ENCODE measurements at regions of chr11 and their contacts with region 1.

Region 1: GRCh38 chr11:117885777-117886176 is 9.3 kb upstream of the FXYD6 start:
- DNase-seq: peak; percentile 94
- H3K4me3 ChIP-seq: peak overlapping the region in 3 of 4 donors; percentile 13 to 20 (median 14)
- H3K27ac ChIP-seq: peak overlapping the region; percentile 74 to 96 (median 92)
- H3K4me1 ChIP-seq: peaks cover 0 to 83% (median 78%) of the 10 kb centered on the region in 4 donors
- H3K27me3 ChIP-seq: no peaks in the 10 kb centered on the region
- CTCF ChIP-seq: no peak
- EP300 ChIP-seq: peak in 1 of 4 donors; percentile 64
- POLR2A ChIP-seq: peak in 1 of 2 donors; percentile 9

Region 2: GRCh38 chr11:117817368-117818040 is 68.3 kb before region 1 on chr11:
- intact Hi-C with region 1: no loop called
- DNase-seq: peak; percentile 91
- H3K4me3 ChIP-seq: peak overlapping the region in 2 of 4 donors; percentile 11 to 15
- H3K27ac ChIP-seq: peak overlapping the region; percentile 11 to 69 (median 38)
- H3K4me1 ChIP-seq: peaks cover 0 to 40% (median 32%) of the 10 kb centered on the region in 4 donors
- H3K27me3 ChIP-seq: no peaks in the 10 kb centered on the region
- CTCF ChIP-seq: peak; percentile 95 to 99 (median 98)
- EP300 ChIP-seq: no peak
- POLR2A ChIP-seq: no peak

Region 3: DNA sequence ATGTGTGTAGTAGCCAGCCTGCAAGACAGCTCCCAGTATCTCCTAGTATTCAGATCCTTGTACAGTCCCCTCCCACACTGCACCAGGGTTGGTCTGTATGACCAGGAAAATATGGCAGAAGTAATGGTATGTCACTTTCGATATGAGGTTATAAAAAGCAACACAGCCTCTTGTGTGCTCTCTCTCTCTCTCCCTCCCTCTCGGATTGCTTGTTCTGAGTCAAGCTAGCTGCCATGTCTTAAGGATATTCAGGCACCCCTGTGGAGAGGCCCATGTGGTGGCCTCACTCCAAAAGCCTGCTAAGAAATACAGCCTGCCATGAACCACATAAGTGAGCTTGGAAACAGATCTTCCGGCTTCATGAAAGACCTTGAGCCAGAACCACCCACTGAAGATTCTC is 34.7 kb before region 1 on chr11:
- intact Hi-C with region 1: loop called (anchors 5 kb)
- DNase-seq: peak; percentile 79
- H3K4me3 ChIP-seq: no peak overlapping the region
- H3K27ac ChIP-seq: peak overlapping the region in 3 of 4 donors; percentile 23 to 78 (median 76)
- H3K4me1 ChIP-seq: peaks cover 0 to 33% (median 19%) of the 10 kb centered on the region in 4 donors
- H3K27me3 ChIP-seq: no peaks in the 10 kb centered on the region
- CTCF ChIP-seq: no peak
- EP300 ChIP-seq: no peak
- POLR2A ChIP-seq: no peak

Region 4: GRCh38 chr11:117946842-117947526 is 61.2 kb after region 1 on chr11:
- intact Hi-C with region 1: no loop called
- DNase-seq: peak; percentile 93
- H3K4me3 ChIP-seq: no peak overlapping the region
- H3K27ac ChIP-seq: no peak overlapping the region
- H3K4me1 ChIP-seq: peaks cover 0 to 8% (median 4%) of the 10 kb centered on the region in 4 donors
- H3K27me3 ChIP-seq: no peaks in the 10 kb centered on the region
- CTCF ChIP-seq: peak; percentile 95 to 98 (median 97)
- EP300 ChIP-seq: no peak
- POLR2A ChIP-seq: no peak

Measured in sigmoid colon (tissue), 7 donors.